Activated CD4-positive, alpha-beta T cell treated with anti-CD3 and anti-CD28 coated beads, Interleukin-2, amount 10 ng/mL, durations not matched to agents 7 days and 5 days (primary cell): ENCODE measurements at regions of chr7 and their contacts with region 1.

Region 1: DNA sequence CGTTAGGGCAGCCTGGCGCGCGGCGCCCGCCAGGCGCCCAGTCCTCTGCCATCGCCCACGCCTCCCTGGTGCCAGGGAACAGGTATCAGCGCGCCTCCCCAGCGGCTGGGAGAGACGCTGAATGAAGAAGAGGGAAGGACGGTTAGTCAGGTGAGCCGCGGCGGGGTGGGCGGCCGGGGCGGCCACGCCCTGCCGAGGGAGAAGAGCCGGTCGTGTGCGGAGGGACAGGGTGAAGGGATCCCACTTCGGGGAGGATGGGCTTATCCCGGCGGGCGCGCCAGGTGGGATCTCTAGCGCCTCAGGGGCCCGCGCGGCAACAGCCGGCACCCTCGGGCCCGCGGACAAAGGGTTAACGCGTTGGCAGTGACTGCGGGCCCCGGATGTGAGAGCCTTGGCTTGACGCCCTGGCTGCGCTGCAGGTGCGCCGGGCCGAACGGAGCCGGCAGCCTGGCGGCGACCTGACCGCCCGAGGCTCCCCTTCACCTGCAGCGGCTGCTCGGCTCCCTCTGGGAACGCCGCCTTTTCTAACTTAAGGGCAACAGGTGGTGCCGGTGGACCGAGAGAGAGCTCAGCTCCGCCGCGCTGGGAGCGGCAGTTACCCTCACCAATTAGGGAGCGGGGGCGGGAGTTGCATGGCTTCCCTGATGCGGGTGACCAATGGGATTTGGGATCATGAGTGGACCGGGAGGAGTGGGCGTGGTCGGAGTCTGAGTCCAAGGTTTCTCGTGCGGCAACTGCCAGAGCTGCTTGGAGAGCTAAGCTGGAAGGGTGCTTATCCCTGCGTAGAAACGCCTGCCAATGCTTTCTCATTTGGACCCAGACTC is at the start of gene ARL4A:
- DNase-seq: peak; percentile 95
- H3K4me3 Mint-ChIP-seq: peak within 1 kb of the TSS; percentile 97
- H3K27ac Mint-ChIP-seq: peak within 1 kb of the TSS; percentile 96
- H3K4me1 Mint-ChIP-seq: peaks cover 41% of the 10 kb centered on the region
- H3K27me3 Mint-ChIP-seq: no peaks in the 10 kb centered on the region
- total RNA-seq, gene ARL4A: 13.9 to 14.9 TPM

Region 2: DNA sequence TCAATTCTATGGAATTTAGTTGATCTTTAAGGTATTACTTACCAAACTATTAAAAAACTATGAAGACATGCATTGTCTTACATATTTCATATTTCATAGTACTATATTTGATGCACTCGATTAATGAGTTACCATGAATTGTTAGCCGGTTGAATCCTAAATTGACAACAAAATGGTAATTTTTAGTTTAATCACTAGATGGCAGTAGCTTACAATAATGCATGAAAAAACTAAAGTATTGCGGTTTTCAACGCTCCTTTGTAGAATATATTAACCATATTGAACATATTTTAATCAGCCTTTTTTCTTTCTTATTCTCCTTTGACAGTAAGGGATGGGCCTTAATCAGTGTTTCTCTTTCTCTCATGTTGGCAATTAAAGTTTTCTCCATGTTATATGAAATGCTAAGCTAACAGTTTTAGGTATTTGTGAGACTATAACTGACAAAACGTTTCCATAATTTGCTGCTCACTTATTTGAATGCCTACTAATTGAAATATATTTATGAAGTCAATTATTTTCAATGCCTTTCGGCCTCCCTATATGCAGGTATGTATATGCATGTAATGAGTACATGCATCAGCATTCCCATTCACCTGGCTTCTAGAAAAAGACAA is 48.1 kb before region 1 on chr7:
- CTCF ChIA-PET with region 1: interaction called, 18 read pairs
- POLR2A ChIA-PET with region 1: no interaction called
- DNase-seq: no peak
- H3K4me3 Mint-ChIP-seq: no peak overlapping the region
- H3K27ac Mint-ChIP-seq: no peak overlapping the region
- H3K4me1 Mint-ChIP-seq: peaks cover 28% of the 10 kb centered on the region
- H3K27me3 Mint-ChIP-seq: peaks cover 3% of the 10 kb centered on the region

Region 3: DNA sequence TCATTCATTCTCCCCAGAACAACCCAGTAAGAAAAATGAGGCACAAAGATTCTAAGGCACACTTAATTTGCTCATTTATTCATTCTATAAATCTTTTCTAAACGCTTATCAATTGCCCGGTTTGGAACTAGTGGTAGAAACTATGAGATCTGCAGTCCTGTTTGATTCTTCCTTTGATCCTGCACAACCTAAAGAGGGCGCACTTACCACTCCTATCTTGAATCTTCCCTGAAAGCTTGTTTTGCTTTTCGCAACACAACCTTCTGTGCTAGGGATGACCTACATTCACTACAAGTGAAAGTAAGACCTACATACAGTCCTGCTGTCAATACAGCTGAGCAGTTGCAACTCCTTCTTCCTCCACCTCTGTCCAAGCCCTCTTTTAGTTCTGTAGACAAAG is 12.3 kb before region 1 on chr7:
- CTCF ChIA-PET with region 1: interaction called, 16 read pairs
- POLR2A ChIA-PET with region 1: interaction called, 5 read pairs
- DNase-seq: peak; percentile 69
- H3K4me3 Mint-ChIP-seq: no peak overlapping the region
- H3K27ac Mint-ChIP-seq: no peak overlapping the region
- H3K4me1 Mint-ChIP-seq: peaks cover 8% of the 10 kb centered on the region
- H3K27me3 Mint-ChIP-seq: no peaks in the 10 kb centered on the region

Region 4: DNA sequence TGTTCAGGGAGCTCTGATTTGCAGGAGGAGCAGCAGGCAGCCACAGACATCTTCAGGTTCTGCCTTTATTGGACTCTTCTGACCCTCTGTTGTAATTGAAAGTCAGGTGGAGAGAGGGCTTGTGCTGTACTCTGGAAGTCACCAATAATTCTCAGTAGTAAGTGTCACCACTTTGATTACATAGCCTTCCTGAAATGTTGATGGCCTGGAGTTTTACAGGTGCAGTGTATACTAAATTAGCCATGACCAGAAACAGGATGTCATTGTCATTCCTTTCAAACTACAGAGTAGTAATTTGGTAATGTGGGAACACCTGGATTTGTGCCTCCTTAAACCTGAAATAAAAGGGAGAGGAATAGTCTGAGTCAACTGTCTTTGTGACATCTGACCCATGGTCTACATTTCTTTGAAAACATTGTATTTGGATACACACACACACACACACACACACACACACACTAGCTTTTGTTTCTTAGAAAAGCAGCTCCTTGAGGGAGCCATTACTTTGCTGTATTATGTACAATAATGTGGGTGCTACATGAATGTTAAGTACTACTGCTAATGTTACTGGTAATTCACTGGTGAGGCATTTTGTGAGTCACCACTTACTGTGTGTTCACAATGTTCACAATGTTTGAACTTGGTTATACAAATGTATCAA is 19.9 kb after region 1 on chr7:
- CTCF ChIA-PET with region 1: interaction called, 18 read pairs
- POLR2A ChIA-PET with region 1: no interaction called
- DNase-seq: no peak
- H3K4me3 Mint-ChIP-seq: no peak overlapping the region
- H3K27ac Mint-ChIP-seq: no peak overlapping the region
- H3K4me1 Mint-ChIP-seq: peaks cover 1% of the 10 kb centered on the region
- H3K27me3 Mint-ChIP-seq: no peaks in the 10 kb centered on the region

Region 5: GRCh38 chr7:12715372-12716133 is 28.4 kb after region 1 on chr7:
- CTCF ChIA-PET with region 1: interaction called, 45 read pairs
- POLR2A ChIA-PET with region 1: interaction called, 4 read pairs
- DNase-seq: peak; percentile 21
- H3K4me3 Mint-ChIP-seq: no peak overlapping the region
- H3K27ac Mint-ChIP-seq: peak overlapping the region; percentile 37
- H3K4me1 Mint-ChIP-seq: peaks cover 34% of the 10 kb centered on the region
- H3K27me3 Mint-ChIP-seq: no peaks in the 10 kb centered on the region

Region 6: DNA sequence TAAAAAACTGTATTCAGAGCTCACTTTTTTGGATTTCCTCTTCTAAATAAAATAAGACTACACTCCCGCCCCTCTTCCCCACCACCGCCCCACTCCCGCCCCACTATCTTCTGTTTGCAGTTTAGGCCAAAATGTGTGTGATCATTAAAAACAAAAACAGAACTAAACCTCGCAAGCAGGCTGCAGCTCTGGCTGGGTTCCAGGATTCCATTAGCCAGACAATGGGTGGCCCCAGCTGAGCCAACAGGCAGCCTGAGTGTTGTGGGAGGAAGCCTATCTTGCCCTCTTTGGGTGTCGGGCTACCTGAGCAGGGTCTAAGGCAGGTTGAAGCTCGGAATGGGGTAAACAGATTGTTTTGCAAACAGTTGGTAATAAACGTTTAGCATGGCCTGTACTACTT is 42.0 kb after region 1 on chr7:
- CTCF ChIA-PET with region 1: interaction called, 30 read pairs
- POLR2A ChIA-PET with region 1: no interaction called
- DNase-seq: no peak
- H3K4me3 Mint-ChIP-seq: no peak overlapping the region
- H3K27ac Mint-ChIP-seq: no peak overlapping the region
- H3K4me1 Mint-ChIP-seq: peaks cover 31% of the 10 kb centered on the region
- H3K27me3 Mint-ChIP-seq: no peaks in the 10 kb centered on the region